Naive thymus-derived CD4-positive, alpha-beta T cell (primary cell): ENCODE measurements at regions of chr4 and their contacts with region 1.

Region 1: GRCh38 chr4:168318266-168318895 is at the start of gene DDX60:
- DNase-seq: peak; percentile 54 to 89 (median 85)
- ATAC-seq: peak; percentile 95
- H3K4me3 ChIP-seq: peak within 1 kb of the TSS; percentile 88
- H3K4me3 Mint-ChIP-seq: peak within 1 kb of the TSS; percentile 84 to 99 (median 96)
- H3K27ac ChIP-seq: peak within 1 kb of the TSS; percentile 95
- H3K27ac Mint-ChIP-seq: peak within 1 kb of the TSS; percentile 96 to 99 (median 99)
- H3K4me1 ChIP-seq: peaks cover 12 to 18% of the 10 kb centered on the region in 2 donors
- H3K4me1 Mint-ChIP-seq: peaks cover 28 to 69% (median 59%) of the 10 kb centered on the region in 7 donors
- H3K27me3 ChIP-seq: no peaks in the 10 kb centered on the region
- H3K27me3 Mint-ChIP-seq: no peaks in the 10 kb centered on the region
- total RNA-seq, gene DDX60: 15.8 to 121 (median 29.0) TPM

Region 2: GRCh38 chr4:168241953-168242352 is 76.4 kb before region 1 on chr4:
- CTCF ChIA-PET with region 1: no interaction called
- POLR2A ChIA-PET with region 1: no interaction called
- intact Hi-C with region 1: no loop called
- DNase-seq: no peak
- ATAC-seq: no peak
- H3K4me3 ChIP-seq: no peak overlapping the region
- H3K4me3 Mint-ChIP-seq: no peak overlapping the region
- H3K27ac ChIP-seq: no peak overlapping the region
- H3K27ac Mint-ChIP-seq: no peak overlapping the region
- H3K4me1 ChIP-seq: peaks cover 0 to 4% of the 10 kb centered on the region in 2 donors
- H3K4me1 Mint-ChIP-seq: peaks cover 0 to 19% (median 9%) of the 10 kb centered on the region in 7 donors
- H3K27me3 ChIP-seq: no peaks in the 10 kb centered on the region
- H3K27me3 Mint-ChIP-seq: no peaks in the 10 kb centered on the region

Region 3: GRCh38 chr4:168304744-168305459 is 13.5 kb before region 1 on chr4:
- CTCF ChIA-PET with region 1: no interaction called
- POLR2A ChIA-PET with region 1: interaction called, 6 read pairs
- intact Hi-C with region 1: loop called in 1 of 2 experiments (anchors 1 kb)
- DNase-seq: no peak
- ATAC-seq: no peak
- H3K4me3 ChIP-seq: no peak overlapping the region
- H3K4me3 Mint-ChIP-seq: no peak overlapping the region
- H3K27ac ChIP-seq: no peak overlapping the region
- H3K27ac Mint-ChIP-seq: no peak overlapping the region
- H3K4me1 ChIP-seq: peaks cover 0 to 7% of the 10 kb centered on the region in 2 donors
- H3K4me1 Mint-ChIP-seq: peaks cover 8 to 50% (median 34%) of the 10 kb centered on the region in 7 donors
- H3K27me3 ChIP-seq: no peaks in the 10 kb centered on the region
- H3K27me3 Mint-ChIP-seq: no peaks in the 10 kb centered on the region

Region 4: GRCh38 chr4:168383510-168383909 is 65.1 kb after region 1 on chr4:
- CTCF ChIA-PET with region 1: no interaction called
- POLR2A ChIA-PET with region 1: no interaction called
- intact Hi-C with region 1: loop called (anchors 5 kb)
- DNase-seq: no peak
- ATAC-seq: no peak
- H3K4me3 ChIP-seq: no peak overlapping the region
- H3K4me3 Mint-ChIP-seq: no peak overlapping the region
- H3K27ac ChIP-seq: no peak overlapping the region
- H3K27ac Mint-ChIP-seq: peak overlapping the region in 1 of 9 donors; percentile 37
- H3K4me1 ChIP-seq: no peaks in the 10 kb centered on the region
- H3K4me1 Mint-ChIP-seq: peaks cover 0 to 12% (median 0%) of the 10 kb centered on the region in 7 donors
- H3K27me3 ChIP-seq: no peaks in the 10 kb centered on the region
- H3K27me3 Mint-ChIP-seq: no peaks in the 10 kb centered on the region

Region 5: GRCh38 chr4:168480931-168481611 is 162.7 kb after region 1 on chr4:
- CTCF ChIA-PET with region 1: no interaction called
- POLR2A ChIA-PET with region 1: interaction called, 16 read pairs
- intact Hi-C with region 1: loop called (anchors 1 kb)
- DNase-seq: peak in 8 of 9 donors; percentile 22 to 85 (median 78)
- ATAC-seq: peak; percentile 75
- H3K4me3 ChIP-seq: peak overlapping the region; percentile 72
- H3K4me3 Mint-ChIP-seq: peak overlapping the region; percentile 88 to 100 (median 98)
- H3K27ac ChIP-seq: peak overlapping the region; percentile 95
- H3K27ac Mint-ChIP-seq: peak overlapping the region; percentile 98 to 100 (median 99)
- H3K4me1 ChIP-seq: peaks cover 20 to 33% of the 10 kb centered on the region in 2 donors
- H3K4me1 Mint-ChIP-seq: peaks cover 46 to 82% (median 74%) of the 10 kb centered on the region in 7 donors
- H3K27me3 ChIP-seq: no peaks in the 10 kb centered on the region
- H3K27me3 Mint-ChIP-seq: no peaks in the 10 kb centered on the region

Region 6: GRCh38 chr4:168731006-168731636 is 412.7 kb after region 1 on chr4:
- CTCF ChIA-PET with region 1: no interaction called
- POLR2A ChIA-PET with region 1: no interaction called
- intact Hi-C with region 1: no loop called
- DNase-seq: no peak
- ATAC-seq: no peak
- H3K4me3 ChIP-seq: no peak overlapping the region
- H3K4me3 Mint-ChIP-seq: no peak overlapping the region
- H3K27ac ChIP-seq: no peak overlapping the region
- H3K27ac Mint-ChIP-seq: no peak overlapping the region
- H3K4me1 ChIP-seq: no peaks in the 10 kb centered on the region
- H3K4me1 Mint-ChIP-seq: no peaks in the 10 kb centered on the region
- H3K27me3 ChIP-seq: no peaks in the 10 kb centered on the region
- H3K27me3 Mint-ChIP-seq: peaks cover 16 to 49% (median 26%) of the 10 kb centered on the region in 5 donors

Region 7: DNA sequence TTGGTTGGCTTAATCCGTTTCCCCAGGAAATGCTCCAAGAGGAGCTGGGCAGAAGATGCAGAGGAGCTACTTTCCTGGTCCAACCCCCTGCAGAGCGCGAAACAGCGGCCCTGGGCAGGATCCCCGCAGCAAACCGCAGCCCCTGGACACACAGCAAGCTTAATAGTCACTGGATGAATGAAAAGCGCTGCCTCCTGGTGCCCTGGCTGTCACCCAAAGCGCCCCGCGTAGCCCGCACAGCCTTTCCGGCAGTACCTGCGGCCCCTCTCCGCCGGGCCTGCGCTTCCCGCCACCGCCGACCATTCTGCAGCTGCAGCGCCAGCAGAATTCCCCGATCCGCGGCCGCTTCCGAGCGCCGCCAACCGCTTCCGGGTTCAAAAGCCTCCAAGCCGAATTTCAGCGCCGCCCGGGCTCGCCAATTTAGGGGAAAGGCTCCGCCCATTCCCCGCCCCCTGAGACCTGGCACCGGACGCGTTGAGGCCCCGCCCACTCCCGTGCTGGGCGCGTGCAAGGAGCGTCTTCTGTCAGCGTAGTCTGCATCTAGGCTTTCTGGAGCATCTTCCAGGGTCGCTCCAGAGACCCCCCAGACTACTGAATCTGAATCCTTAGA is 1439.3 kb after region 1 on chr4 and contains the start of gene HPF1:
- CTCF ChIA-PET with region 1: no interaction called
- POLR2A ChIA-PET with region 1: no interaction called
- intact Hi-C with region 1: loop called in 1 of 2 experiments (anchors 5 kb)
- DNase-seq: peak; percentile 84 to 93 (median 89)
- ATAC-seq: peak; percentile 98
- H3K4me3 ChIP-seq: peak within 1 kb of the TSS; percentile 83
- H3K4me3 Mint-ChIP-seq: peak within 1 kb of the TSS; percentile 82 to 92 (median 88)
- H3K27ac ChIP-seq: peak within 1 kb of the TSS; percentile 66
- H3K27ac Mint-ChIP-seq: peak within 1 kb of the TSS; percentile 52 to 81 (median 71)
- H3K4me1 ChIP-seq: peaks cover 0 to 7% of the 10 kb centered on the region in 2 donors
- H3K4me1 Mint-ChIP-seq: peaks cover 19 to 38% (median 30%) of the 10 kb centered on the region in 7 donors
- H3K27me3 ChIP-seq: no peaks in the 10 kb centered on the region
- H3K27me3 Mint-ChIP-seq: peaks cover 0 to 22% (median 0%) of the 10 kb centered on the region in 5 donors
- total RNA-seq, gene HPF1: 9.9 to 23.5 (median 13.8) TPM